Head of caudate nucleus (tissue), 42 donors: ENCODE measurements at regions of chr6 and their contacts with region 1.

Region 1: DNA sequence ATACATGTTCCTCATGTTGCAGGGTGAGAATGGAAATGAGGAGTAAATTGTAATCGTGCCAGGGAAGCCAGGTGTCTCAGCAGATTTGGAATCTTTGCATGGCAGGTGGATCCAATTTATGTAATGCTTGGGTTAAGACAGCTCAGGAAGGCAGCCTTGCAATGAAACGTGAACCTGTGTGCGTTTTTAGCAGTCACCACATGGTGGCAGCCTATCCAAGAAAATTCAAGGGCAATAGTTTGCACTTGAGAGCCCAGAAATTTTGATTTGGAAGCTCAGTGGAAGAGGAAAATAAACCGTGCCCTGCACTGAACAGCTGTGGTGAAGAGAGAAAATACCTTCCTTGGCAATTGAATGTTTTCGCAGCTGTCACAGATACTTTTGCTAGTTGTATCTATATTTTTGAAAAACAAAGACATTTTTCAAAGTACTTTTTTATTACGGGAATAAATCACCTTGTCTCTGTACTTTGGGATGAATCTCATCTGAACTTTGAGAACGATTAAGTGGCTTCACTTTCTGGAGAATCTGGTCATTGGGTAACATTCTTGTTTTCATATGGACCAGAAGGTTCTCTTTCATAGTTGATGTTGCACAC is 26.5 kb downstream of the MTHFD1L start:
- DNase-seq: peak; percentile 46 to 91 (median 80)

Region 2: GRCh38 chr6:151323791-151324487 is 432.0 kb after region 1 on chr6:
- intact Hi-C with region 1: loop called (anchors 5 kb)
- DNase-seq: peak; percentile 52 to 92 (median 83)

Region 3: GRCh38 chr6:151339369-151339768 is 447.4 kb after region 1 on chr6:
- intact Hi-C with region 1: loop called (anchors 5 kb)
- DNase-seq: no peak